ENCODE measurements at regions of chr10 and their contacts with region 1.

Region 1: GRCh38 chr10:100346765-100347567 is at the start of gene SCD:
- DNase-seq: peak; percentile 94
- ATAC-seq: peak; percentile 90
- H3K4me3 Mint-ChIP-seq: peak within 1 kb of the TSS; percentile 99
- H3K27ac Mint-ChIP-seq: peak within 1 kb of the TSS; percentile 94
- H3K4me1 Mint-ChIP-seq: peaks cover 50% of the 10 kb centered on the region
- H3K27me3 Mint-ChIP-seq: no peaks in the 10 kb centered on the region
- CTCF ChIP-seq: no peak
- total RNA-seq, gene SCD: 271 TPM

Region 2: DNA sequence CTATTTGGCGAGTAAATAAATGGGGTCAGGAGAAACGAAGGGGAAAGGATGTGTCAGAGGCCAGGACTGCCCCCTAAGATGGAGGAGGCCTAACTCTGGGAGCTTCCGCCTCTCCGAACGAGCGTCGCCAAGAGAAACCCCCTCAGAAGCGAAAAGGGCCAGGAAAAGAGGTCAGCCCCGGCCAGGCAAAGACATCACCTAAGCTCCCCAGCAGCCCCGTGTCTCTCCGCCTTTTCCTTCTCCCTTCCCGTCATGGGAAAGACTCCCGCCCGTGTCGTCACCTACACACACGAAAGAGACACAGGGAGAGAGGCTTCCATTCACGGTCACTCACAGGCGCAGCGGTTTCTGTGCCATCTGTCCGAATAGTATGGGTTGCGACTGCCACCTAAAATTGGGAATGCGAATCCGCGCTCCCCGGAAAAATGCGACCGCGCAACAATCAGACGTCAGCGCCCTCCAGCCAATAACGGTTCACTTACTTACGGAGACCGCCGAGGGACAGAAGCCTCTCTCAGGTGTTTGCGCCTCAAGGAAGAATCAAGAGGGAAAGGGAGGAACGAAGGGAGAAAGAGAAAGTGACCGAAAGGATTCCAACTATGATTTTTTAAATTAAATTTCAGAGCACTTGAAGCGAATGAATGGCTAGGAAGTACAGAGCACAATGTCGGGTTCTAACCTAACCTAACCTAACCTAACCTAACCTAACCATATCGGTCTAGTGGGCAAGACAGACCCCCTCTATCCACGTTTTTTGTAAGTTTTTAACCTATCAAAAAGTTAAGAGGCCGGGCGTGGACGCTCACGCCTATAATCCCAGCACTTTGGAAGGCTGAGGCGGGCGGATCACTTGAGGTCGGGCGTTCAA is 79.5 kb before region 1 on chr10 and contains the start of gene CWF19L1:
- CTCF ChIA-PET with region 1: no interaction called
- POLR2A ChIA-PET with region 1: no interaction called
- intact Hi-C with region 1: no loop called
- DNase-seq: peak; percentile 85
- ATAC-seq: peak; percentile 90
- H3K4me3 Mint-ChIP-seq: peak within 1 kb of the TSS; percentile 99
- H3K27ac Mint-ChIP-seq: peak within 1 kb of the TSS; percentile 100
- H3K4me1 Mint-ChIP-seq: peaks cover 18% of the 10 kb centered on the region
- H3K27me3 Mint-ChIP-seq: no peaks in the 10 kb centered on the region
- CTCF ChIP-seq: no peak
- total RNA-seq, gene CWF19L1: 38.5 to 43.3 TPM

Region 3: GRCh38 chr10:100364735-100365391 is 17.9 kb after region 1 on chr10:
- CTCF ChIA-PET with region 1: interaction called, 14 read pairs
- POLR2A ChIA-PET with region 1: interaction called, 36 read pairs
- intact Hi-C with region 1: no loop called
- DNase-seq: peak; percentile 17
- ATAC-seq: peak; percentile 68
- H3K4me3 Mint-ChIP-seq: no peak overlapping the region
- H3K27ac Mint-ChIP-seq: no peak overlapping the region
- H3K4me1 Mint-ChIP-seq: peaks cover 21% of the 10 kb centered on the region
- H3K27me3 Mint-ChIP-seq: no peaks in the 10 kb centered on the region
- CTCF ChIP-seq: no peak

Region 4: GRCh38 chr10:100373298-100374136 is 26.6 kb after region 1 on chr10:
- CTCF ChIA-PET with region 1: interaction called, 14 read pairs
- POLR2A ChIA-PET with region 1: interaction called, 32 read pairs
- intact Hi-C with region 1: loop called (anchors 2 kb)
- DNase-seq: peak; percentile 100
- ATAC-seq: peak; percentile 83
- H3K4me3 Mint-ChIP-seq: no peak overlapping the region
- H3K27ac Mint-ChIP-seq: no peak overlapping the region
- H3K4me1 Mint-ChIP-seq: peaks cover 39% of the 10 kb centered on the region
- H3K27me3 Mint-ChIP-seq: no peaks in the 10 kb centered on the region
- CTCF ChIP-seq: no peak